ENCODE measurements at regions of chr11 and their contacts with region 1.

Region 1: DNA sequence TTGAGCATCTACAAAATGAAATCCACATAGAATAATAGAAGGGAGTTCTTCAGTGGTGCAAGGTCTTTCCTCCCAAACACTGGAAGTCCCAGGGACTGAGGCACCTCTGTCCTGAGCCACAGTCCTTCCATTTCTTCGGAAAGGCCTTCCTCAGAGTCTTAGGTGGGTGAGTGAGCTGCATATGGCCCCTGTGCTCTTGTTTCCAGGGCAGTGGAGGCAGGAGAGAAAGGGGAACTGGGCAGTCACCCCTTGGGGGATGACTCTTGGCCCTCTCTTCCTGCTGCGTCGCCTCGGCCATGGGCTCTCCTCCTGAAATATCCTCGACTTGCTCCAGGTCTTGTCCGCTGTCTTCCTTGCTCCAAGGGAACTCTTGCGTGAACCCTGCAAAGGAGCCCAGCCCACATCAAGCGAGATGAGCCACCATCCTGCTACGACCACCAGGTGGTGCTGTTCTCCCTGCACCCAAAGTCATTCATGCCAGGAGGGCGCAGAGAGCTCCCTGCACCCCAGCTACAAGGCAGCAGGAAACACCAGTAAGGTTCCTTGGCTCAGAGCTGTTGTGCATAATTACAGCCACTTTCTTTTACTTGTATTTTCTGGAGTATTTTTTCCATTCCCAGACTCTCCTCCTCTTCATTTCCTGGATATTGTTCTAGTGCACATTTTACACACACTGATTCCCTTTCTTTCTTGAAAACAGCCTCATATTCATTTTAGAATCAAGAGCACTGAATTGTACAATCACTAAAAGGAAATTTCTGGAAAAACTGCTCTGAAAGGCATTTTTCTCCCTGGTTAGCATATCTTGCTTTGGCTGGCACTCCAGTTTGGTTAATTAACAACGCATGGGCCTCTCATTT is 397.8 kb downstream of the OPCML start:
- DNase-seq: no peak
- H3K4me3 ChIP-seq: no peak overlapping the region
- H3K27ac ChIP-seq: no peak overlapping the region
- H3K4me1 ChIP-seq: no peaks in the 10 kb centered on the region
- H3K27me3 ChIP-seq: peaks cover 0 to 14% (median 0%) of the 10 kb centered on the region in 4 donors
- CTCF ChIP-seq: peak; percentile 13 to 87 (median 80)
- POLR2A ChIP-seq: no peak

Region 2: GRCh38 chr11:132874638-132875037 is 259.9 kb before region 1 on chr11:
- intact Hi-C with region 1: no loop called
- DNase-seq: no peak
- H3K4me3 ChIP-seq: no peak overlapping the region
- H3K27ac ChIP-seq: no peak overlapping the region
- H3K4me1 ChIP-seq: peaks cover 0 to 4% (median 0%) of the 10 kb centered on the region in 3 donors
- H3K27me3 ChIP-seq: no peaks in the 10 kb centered on the region
- CTCF ChIP-seq: no peak
- POLR2A ChIP-seq: no peak

Region 3: GRCh38 chr11:133176748-133177147 is 42.2 kb after region 1 on chr11:
- intact Hi-C with region 1: no loop called
- DNase-seq: no peak
- H3K4me3 ChIP-seq: no peak overlapping the region
- H3K27ac ChIP-seq: no peak overlapping the region
- H3K4me1 ChIP-seq: no peaks in the 10 kb centered on the region
- H3K27me3 ChIP-seq: peaks cover 0 to 21% (median 0%) of the 10 kb centered on the region in 4 donors
- CTCF ChIP-seq: no peak
- POLR2A ChIP-seq: no peak

Region 4: GRCh38 chr11:133249065-133249464 is 114.5 kb after region 1 on chr11:
- intact Hi-C with region 1: no loop called
- DNase-seq: no peak
- H3K4me3 ChIP-seq: no peak overlapping the region
- H3K27ac ChIP-seq: no peak overlapping the region
- H3K4me1 ChIP-seq: no peaks in the 10 kb centered on the region
- H3K27me3 ChIP-seq: no peaks in the 10 kb centered on the region
- CTCF ChIP-seq: no peak
- POLR2A ChIP-seq: no peak

Region 5: GRCh38 chr11:133619973-133620372 is 485.4 kb after region 1 on chr11:
- intact Hi-C with region 1: loop called (anchors 10 kb)
- DNase-seq: no peak
- H3K4me3 ChIP-seq: no peak overlapping the region
- H3K27ac ChIP-seq: no peak overlapping the region
- H3K4me1 ChIP-seq: no peaks in the 10 kb centered on the region
- H3K27me3 ChIP-seq: no peaks in the 10 kb centered on the region
- CTCF ChIP-seq: peak in 1 of 6 experiments; percentile 38
- POLR2A ChIP-seq: no peak

Measured in esophagus squamous epithelium (tissue), 5 donors.